ENCODE measurements at regions of chr11 and their contacts with region 1.

Region 1: GRCh38 chr11:85752890-85753581 is 57.9 kb downstream of the SYTL2 start:
- DNase-seq: peak; percentile 97 to 98 (median 98)
- H3K4me3 ChIP-seq: peak overlapping the region; percentile 0 to 50
- H3K4me3 Mint-ChIP-seq: peak overlapping the region; percentile 73 to 93 (median 80)
- H3K27ac ChIP-seq: peak overlapping the region; percentile 60
- H3K27ac Mint-ChIP-seq: peak overlapping the region; percentile 97 to 99 (median 98)
- H3K4me1 ChIP-seq: peaks cover 88% of the 10 kb centered on the region
- H3K4me1 Mint-ChIP-seq: peaks cover 73 to 97% (median 86%) of the 10 kb centered on the region in 4 donors
- H3K27me3 ChIP-seq: no peaks in the 10 kb centered on the region
- H3K27me3 Mint-ChIP-seq: peaks cover 2 to 5% of the 10 kb centered on the region in 2 donors

Region 2: DNA sequence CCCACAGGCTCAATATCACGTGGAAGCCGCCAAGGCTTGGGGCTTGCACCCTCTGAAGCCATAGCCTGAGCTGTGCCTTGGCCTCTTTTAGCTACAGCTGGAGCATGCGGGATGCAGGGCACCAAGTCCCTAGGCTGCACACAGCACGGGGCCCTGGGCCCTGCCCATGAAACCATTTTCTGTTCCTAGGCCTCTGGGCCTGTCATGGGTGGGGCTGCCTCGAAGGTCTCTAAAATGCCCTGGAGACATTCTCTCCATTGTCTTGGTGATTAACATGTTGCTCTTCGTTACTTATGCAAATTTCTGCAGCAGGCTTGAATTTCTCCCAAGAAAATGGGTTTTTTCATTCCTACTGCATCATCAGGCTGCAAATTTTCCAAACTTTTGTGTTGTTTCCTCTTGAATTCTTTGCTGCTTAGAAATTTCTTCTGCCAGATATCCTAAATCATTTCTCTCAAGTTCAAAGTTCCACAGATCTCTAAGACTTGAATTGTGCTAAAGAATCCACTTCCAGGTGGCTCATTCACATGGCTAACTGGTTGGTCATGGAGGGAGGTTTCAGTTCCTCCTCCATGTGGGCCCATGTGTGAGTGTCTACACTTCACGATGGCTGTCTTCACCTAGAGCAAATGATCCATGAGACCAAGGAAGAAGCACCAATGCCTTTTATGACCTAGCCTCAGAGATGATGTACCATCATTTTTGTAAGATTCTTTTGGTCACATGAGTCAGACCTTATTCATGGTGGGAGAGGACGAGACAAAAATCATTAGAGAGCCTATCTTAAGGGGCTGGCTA is 80.7 kb before region 1 on chr11:
- CTCF ChIA-PET with region 1: no interaction called
- POLR2A ChIA-PET with region 1: no interaction called
- intact Hi-C with region 1: no loop called
- DNase-seq: no peak
- H3K4me3 ChIP-seq: no peak overlapping the region
- H3K4me3 Mint-ChIP-seq: no peak overlapping the region
- H3K27ac ChIP-seq: no peak overlapping the region
- H3K27ac Mint-ChIP-seq: no peak overlapping the region
- H3K4me1 ChIP-seq: no peaks in the 10 kb centered on the region
- H3K4me1 Mint-ChIP-seq: no peaks in the 10 kb centered on the region
- H3K27me3 ChIP-seq: no peaks in the 10 kb centered on the region
- H3K27me3 Mint-ChIP-seq: peaks cover 0 to 3% of the 10 kb centered on the region in 2 donors

Region 3: DNA sequence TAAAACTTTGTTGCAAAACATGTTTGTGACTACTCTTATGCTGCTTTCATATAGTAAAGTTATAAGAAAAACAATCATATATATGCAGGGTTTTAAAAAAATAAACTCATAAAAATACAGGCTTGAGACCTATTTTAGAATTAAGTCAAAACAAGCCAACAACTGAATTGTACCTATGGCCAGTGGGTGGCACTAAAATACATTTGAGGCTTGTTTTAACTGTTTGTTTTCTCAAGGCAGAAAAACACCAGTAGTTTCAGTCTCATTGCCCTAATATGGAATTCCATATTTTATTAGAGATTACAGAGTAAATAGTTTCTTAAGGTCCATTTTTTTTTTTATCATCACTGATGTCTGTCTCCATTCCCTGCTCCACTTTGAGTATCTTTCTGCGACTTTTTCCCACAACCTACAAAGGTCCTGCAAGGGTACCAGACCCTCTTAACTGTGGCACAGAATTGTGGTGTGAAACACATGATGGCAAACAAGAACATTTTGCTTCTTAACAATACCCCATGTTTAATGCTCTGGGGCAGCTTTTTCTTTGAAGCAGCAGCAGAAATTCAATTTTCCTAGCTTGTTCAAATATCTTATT is 58.6 kb before region 1 on chr11:
- CTCF ChIA-PET with region 1: interaction called, 3 read pairs
- POLR2A ChIA-PET with region 1: interaction called, 4 read pairs
- intact Hi-C with region 1: loop called (anchors 2 kb)
- DNase-seq: peak in 4 of 5 donors; percentile 40 to 57 (median 45)
- H3K4me3 ChIP-seq: no peak overlapping the region
- H3K4me3 Mint-ChIP-seq: no peak overlapping the region
- H3K27ac ChIP-seq: no peak overlapping the region
- H3K27ac Mint-ChIP-seq: peak overlapping the region in 2 of 7 donors; percentile 7 to 53
- H3K4me1 ChIP-seq: peaks cover 5% of the 10 kb centered on the region
- H3K4me1 Mint-ChIP-seq: peaks cover 8 to 12% (median 9%) of the 10 kb centered on the region in 4 donors
- H3K27me3 ChIP-seq: no peaks in the 10 kb centered on the region
- H3K27me3 Mint-ChIP-seq: peaks cover 0 to 2% of the 10 kb centered on the region in 2 donors

Region 4: GRCh38 chr11:85737748-85738147 is 15.3 kb before region 1 on chr11:
- CTCF ChIA-PET with region 1: interaction called, 3 read pairs
- POLR2A ChIA-PET with region 1: interaction called, 5 read pairs
- intact Hi-C with region 1: loop called (anchors 2 kb)
- DNase-seq: peak in 2 of 5 donors; percentile 28 to 49
- H3K4me3 ChIP-seq: no peak overlapping the region
- H3K4me3 Mint-ChIP-seq: peak overlapping the region in 5 of 8 donors; percentile 17 to 67 (median 27)
- H3K27ac ChIP-seq: no peak overlapping the region
- H3K27ac Mint-ChIP-seq: peak overlapping the region; percentile 39 to 90 (median 76)
- H3K4me1 ChIP-seq: peaks cover 32% of the 10 kb centered on the region
- H3K4me1 Mint-ChIP-seq: peaks cover 23 to 57% (median 36%) of the 10 kb centered on the region in 4 donors
- H3K27me3 ChIP-seq: no peaks in the 10 kb centered on the region
- H3K27me3 Mint-ChIP-seq: no peaks in the 10 kb centered on the region

Region 5: DNA sequence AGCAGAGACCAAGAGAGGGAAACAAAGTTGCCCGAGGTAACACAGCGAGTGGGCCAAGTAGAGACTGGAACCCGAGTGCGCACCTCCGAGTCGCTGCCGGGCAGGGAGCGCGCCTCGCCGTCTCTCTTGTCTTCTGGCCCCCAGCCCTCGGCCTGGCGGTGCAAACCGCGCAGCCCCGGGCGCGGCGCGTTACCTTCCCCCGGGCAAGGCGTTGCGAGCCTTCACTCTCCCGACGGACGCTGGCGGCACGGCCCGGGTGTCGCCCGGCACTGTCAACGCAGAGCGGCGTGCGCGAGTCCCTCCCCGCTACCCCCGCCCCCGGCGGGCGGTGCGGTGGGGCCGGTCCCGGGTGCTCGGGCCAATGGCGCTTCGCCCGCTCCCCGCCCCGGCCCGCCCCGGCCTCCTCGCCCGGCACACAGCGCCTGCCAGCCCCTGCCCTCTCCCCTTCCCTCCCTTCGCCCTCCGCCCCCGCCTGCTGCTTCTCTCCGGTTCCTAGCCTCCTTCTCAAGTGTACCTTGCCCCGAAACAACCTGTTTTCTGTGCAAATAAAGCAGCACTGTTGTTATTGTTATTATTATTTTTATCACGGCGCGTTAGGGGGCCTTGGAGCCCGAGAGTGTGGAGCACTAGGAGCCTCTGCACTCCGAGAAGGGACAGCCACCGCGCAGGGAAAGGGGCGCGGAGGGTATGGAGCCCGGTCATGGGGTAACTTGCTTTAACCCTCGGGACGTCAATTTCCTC is 58.0 kb after region 1 on chr11 and contains the start of gene SYTL2:
- CTCF ChIA-PET with region 1: interaction called, 3 read pairs
- POLR2A ChIA-PET with region 1: interaction called, 8 read pairs
- intact Hi-C with region 1: loop called (anchors 1 kb)
- DNase-seq: peak; percentile 74 to 83 (median 78)
- H3K4me3 ChIP-seq: peak within 1 kb of the TSS; percentile 58 to 85
- H3K4me3 Mint-ChIP-seq: peak within 1 kb of the TSS; percentile 89 to 97 (median 94)
- H3K27ac ChIP-seq: peak within 1 kb of the TSS; percentile 59
- H3K27ac Mint-ChIP-seq: peak within 1 kb of the TSS; percentile 90 to 96 (median 94)
- H3K4me1 ChIP-seq: peaks cover 38% of the 10 kb centered on the region
- H3K4me1 Mint-ChIP-seq: peaks cover 21 to 69% (median 45%) of the 10 kb centered on the region in 4 donors
- H3K27me3 ChIP-seq: no peaks in the 10 kb centered on the region
- H3K27me3 Mint-ChIP-seq: peaks cover 0 to 3% of the 10 kb centered on the region in 2 donors
- total RNA-seq, gene SYTL2: 35.5 to 35.7 TPM

Region 6: DNA sequence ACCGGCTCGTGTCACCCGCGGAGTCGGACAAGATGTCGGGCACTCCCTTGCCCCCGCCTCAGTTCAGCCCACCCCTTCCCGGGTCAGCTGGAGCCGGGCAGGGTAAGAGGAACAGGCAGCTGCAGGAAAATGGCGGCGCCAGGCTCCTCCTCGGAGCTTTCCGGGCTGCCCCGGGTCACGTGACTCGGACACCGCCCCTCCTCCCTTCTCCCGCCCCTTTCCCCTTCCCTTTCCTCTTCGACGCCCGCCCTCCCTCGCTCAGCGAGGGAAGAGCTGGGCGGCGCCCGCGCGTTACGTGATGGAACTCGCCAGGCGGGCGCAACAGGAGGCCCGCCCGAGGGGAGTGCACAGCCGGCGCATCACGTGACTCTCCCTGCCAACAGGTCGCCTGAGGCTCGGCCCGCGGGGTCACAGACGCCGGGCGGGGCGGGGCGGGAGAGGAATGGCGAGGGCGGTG is 315.9 kb after region 1 on chr11 and contains the start of gene PICALM:
- CTCF ChIA-PET with region 1: no interaction called
- POLR2A ChIA-PET with region 1: interaction called, 4 read pairs
- intact Hi-C with region 1: loop called (anchors 5 kb)
- DNase-seq: peak; percentile 94 to 97 (median 97)
- H3K4me3 ChIP-seq: peak within 1 kb of the TSS; percentile 34 to 92
- H3K4me3 Mint-ChIP-seq: peak within 1 kb of the TSS; percentile 93 to 99 (median 98)
- H3K27ac ChIP-seq: peak within 1 kb of the TSS; percentile 81
- H3K27ac Mint-ChIP-seq: peak within 1 kb of the TSS; percentile 89 to 98 (median 96)
- H3K4me1 ChIP-seq: peaks cover 32% of the 10 kb centered on the region
- H3K4me1 Mint-ChIP-seq: peaks cover 18 to 46% (median 28%) of the 10 kb centered on the region in 4 donors
- H3K27me3 ChIP-seq: no peaks in the 10 kb centered on the region
- H3K27me3 Mint-ChIP-seq: peaks cover 0 to 2% of the 10 kb centered on the region in 2 donors
- total RNA-seq, gene PICALM: 127 to 138 TPM

Region 7: DNA sequence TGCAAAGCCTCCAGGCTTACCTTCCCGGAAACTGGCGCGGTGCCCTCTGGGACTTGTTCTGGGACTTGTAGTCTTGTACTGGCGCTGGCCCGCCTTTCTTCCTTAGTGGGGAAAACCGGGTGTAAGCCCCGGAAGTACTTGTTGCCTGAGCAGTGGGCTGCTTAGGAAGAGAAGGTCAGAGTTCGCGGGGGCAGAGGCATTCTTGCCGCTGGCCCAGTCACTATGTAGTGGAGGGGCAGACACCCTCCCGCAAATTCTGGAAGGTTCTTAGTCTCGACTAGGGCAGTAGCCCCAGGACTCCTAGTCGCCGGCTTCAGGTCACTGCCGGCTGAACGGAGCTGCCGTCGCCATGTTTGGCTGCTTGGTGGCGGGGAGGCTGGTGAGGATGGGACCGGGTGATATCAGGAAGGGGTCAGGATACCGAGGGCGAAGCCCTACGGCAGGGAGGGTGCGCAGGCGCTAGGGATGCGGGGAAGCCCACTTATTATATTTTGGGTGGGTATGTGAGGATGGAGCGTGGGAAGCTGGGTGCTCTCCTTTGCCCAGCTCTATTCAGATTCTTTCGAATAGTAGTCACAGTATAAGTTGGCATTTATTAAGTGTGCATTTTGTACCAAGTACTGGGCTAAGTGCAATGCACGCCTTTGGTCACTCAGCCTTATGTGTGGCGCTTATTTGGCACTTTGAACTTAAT is 549.2 kb after region 1 on chr11 and contains the start of gene HIKESHI:
- CTCF ChIA-PET with region 1: no interaction called
- POLR2A ChIA-PET with region 1: no interaction called
- intact Hi-C with region 1: loop called (anchors 5 kb)
- DNase-seq: peak; percentile 83 to 95 (median 84)
- H3K4me3 ChIP-seq: peak within 1 kb of the TSS; percentile 54 to 85
- H3K4me3 Mint-ChIP-seq: peak within 1 kb of the TSS; percentile 94 to 100 (median 100)
- H3K27ac ChIP-seq: peak within 1 kb of the TSS; percentile 87
- H3K27ac Mint-ChIP-seq: peak within 1 kb of the TSS; percentile 93 to 100 (median 99)
- H3K4me1 ChIP-seq: peaks cover 24% of the 10 kb centered on the region
- H3K4me1 Mint-ChIP-seq: peaks cover 12 to 29% (median 23%) of the 10 kb centered on the region in 4 donors
- H3K27me3 ChIP-seq: no peaks in the 10 kb centered on the region
- H3K27me3 Mint-ChIP-seq: peaks cover 0 to 1% of the 10 kb centered on the region in 2 donors
- total RNA-seq, gene HIKESHI: 26.6 to 33.3 TPM

Measured in CD4-positive, alpha-beta memory T cell (primary cell).